Naive thymus-derived CD8-positive, alpha-beta T cell (primary cell): ENCODE measurements at regions of chr7 and their contacts with region 1.

Region 1: DNA sequence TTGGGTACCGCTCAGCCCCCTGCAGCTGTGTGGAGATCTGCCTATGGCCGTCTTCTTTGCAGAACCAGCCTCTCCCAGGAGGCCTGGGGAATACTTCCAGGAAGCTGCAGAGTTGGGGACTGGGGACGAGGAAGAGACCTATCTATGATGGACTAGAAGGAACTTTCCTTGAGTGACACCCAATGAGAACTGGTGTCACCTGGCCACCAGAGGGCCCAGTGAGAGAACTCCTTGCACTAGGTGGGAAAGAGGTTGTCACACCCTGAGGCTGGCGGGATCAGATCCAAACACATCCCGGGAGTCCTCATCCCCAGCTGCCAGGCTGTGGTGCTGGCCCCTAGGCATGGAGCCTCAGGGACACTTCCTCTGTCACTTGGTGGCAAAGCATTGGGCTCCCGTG is 4.9 kb upstream of the GRID2IP start:
- DNase-seq: no peak
- ATAC-seq: no peak
- H3K4me3 Mint-ChIP-seq: no peak overlapping the region
- H3K27ac Mint-ChIP-seq: peak overlapping the region in 2 of 10 donors; percentile 9 to 64
- H3K4me1 Mint-ChIP-seq: peaks cover 4 to 11% (median 9%) of the 10 kb centered on the region in 4 donors
- H3K27me3 Mint-ChIP-seq: no peaks in the 10 kb centered on the region

Region 2: GRCh38 chr7:6430271-6430940 is 125.8 kb before region 1 on chr7:
- POLR2A ChIA-PET with region 1: no interaction called
- DNase-seq: no peak
- ATAC-seq: peak in 1 of 2 donors; percentile 50
- H3K4me3 Mint-ChIP-seq: no peak overlapping the region
- H3K27ac Mint-ChIP-seq: peak overlapping the region in 1 of 10 donors; percentile 41
- H3K4me1 Mint-ChIP-seq: peaks cover 1 to 13% (median 7%) of the 10 kb centered on the region in 4 donors
- H3K27me3 Mint-ChIP-seq: no peaks in the 10 kb centered on the region

Region 3: GRCh38 chr7:6530626-6531491 is 25.3 kb before region 1 on chr7:
- POLR2A ChIA-PET with region 1: interaction called, 15 read pairs
- DNase-seq: peak; percentile 60 to 89 (median 76)
- ATAC-seq: peak; percentile 86 to 88
- H3K4me3 Mint-ChIP-seq: peak overlapping the region; percentile 78 to 90 (median 85)
- H3K27ac Mint-ChIP-seq: peak overlapping the region in 7 of 10 donors; percentile 47 to 89 (median 62)
- H3K4me1 Mint-ChIP-seq: peaks cover 12 to 35% (median 26%) of the 10 kb centered on the region in 4 donors
- H3K27me3 Mint-ChIP-seq: peaks cover 1 to 13% (median 12%) of the 10 kb centered on the region in 5 donors